Dorsolateral prefrontal cortex (tissue), 120 donors: ENCODE measurements at regions of chr10 and their contacts with region 1.

Region 1: GRCh38 chr10:94362360-94363250 is at the start of gene NOC3L:
- DNase-seq: peak; percentile 94 to 97 (median 96)
- H3K4me3 ChIP-seq: peak within 1 kb of the TSS; percentile 40 to 96 (median 81)
- H3K27ac ChIP-seq: peak within 1 kb of the TSS in 56 of 59 donors; percentile 7 to 100 (median 82)
- H3K27me3 ChIP-seq: no peaks in the 10 kb centered on the region
- CTCF ChIP-seq: peak; percentile 81 to 100 (median 97)
- total RNA-seq, gene NOC3L: 6.0 to 19.1 (median 12.2) TPM

Region 2: GRCh38 chr10:94155722-94156271 is 206.8 kb before region 1 on chr10:
- intact Hi-C with region 1: no loop called
- DNase-seq: no peak
- H3K4me3 ChIP-seq: no peak overlapping the region
- H3K27ac ChIP-seq: no peak overlapping the region
- H3K27me3 ChIP-seq: no peaks in the 10 kb centered on the region
- CTCF ChIP-seq: no peak

Region 3: DNA sequence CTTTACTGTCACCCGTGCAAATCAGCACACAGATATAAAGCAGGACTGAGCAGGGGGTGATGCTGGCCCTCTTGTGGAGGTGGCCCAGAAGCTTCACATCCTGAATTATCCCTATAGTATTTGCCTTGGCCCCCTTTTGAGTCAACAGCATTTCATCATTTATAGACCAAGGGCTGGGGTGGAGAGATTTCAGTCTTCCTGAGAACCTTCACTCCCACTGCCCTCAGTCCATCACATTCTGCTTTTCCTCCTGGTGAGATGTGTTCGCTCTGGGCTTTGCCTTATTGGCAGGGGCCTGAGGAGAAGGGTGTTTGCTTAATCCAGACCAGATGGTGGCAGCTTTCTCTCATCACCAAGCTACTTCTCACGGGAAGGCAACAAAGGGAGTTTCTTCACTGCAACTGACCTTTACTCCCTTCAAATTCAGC is 47.6 kb before region 1 on chr10:
- intact Hi-C with region 1: no loop called
- DNase-seq: no peak
- H3K4me3 ChIP-seq: no peak overlapping the region
- H3K27ac ChIP-seq: peak overlapping the region in 2 of 59 donors; percentile 22 to 57
- H3K27me3 ChIP-seq: no peaks in the 10 kb centered on the region
- CTCF ChIP-seq: no peak

Region 4: DNA sequence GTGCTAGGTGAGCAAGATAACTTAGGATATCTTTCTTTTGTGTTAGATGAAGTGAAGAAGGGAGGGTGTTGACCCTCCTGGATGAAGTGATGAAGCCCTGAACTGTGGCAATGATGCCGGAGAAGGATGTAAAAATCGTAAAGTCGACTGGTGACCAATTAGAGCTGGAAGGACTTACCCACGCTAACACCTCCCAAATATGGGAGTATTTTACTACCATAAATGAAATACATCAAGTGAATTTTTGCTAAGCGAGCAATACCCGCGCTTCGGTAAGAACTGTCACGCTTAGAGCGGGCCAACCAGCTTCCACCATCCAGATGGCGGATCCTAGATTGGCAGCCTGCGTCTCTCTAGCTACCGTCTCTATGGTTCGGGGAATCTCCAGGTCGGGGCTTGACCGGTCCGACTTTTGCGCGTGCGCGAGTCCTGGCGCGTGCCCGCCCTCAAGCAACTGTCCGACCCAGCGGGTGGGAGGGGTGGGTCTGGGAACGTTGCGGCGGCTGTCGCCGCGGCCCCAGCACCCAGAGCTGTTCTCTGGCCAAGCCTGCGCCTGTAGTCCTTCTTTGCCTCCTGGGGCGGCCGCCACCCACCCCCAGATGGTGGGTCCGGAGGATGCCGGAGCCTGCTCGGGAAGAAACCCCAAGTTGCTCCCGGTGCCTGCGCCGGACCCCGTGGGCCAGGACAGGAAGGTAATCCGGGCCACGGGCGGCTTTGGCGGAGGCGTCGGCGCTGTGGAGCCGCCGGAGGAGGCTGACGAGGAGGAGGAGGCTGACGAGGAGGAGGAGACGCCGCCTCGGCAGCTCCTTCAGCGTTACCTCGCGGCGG is 39.6 kb after region 1 on chr10 and contains the start of gene TBC1D12:
- intact Hi-C with region 1: loop called (anchors 1 kb)
- DNase-seq: peak; percentile 94 to 97 (median 96)
- H3K4me3 ChIP-seq: peak within 1 kb of the TSS; percentile 59 to 98 (median 93)
- H3K27ac ChIP-seq: peak within 1 kb of the TSS; percentile 80 to 99 (median 96)
- H3K27me3 ChIP-seq: no peaks in the 10 kb centered on the region
- CTCF ChIP-seq: peak in 43 of 56 donors; percentile 2 to 63 (median 32)
- total RNA-seq, gene TBC1D12: 13.7 to 84.3 (median 27.5) TPM